ENCODE measurements at regions of chr20 and their contacts with region 1.

Region 1: DNA sequence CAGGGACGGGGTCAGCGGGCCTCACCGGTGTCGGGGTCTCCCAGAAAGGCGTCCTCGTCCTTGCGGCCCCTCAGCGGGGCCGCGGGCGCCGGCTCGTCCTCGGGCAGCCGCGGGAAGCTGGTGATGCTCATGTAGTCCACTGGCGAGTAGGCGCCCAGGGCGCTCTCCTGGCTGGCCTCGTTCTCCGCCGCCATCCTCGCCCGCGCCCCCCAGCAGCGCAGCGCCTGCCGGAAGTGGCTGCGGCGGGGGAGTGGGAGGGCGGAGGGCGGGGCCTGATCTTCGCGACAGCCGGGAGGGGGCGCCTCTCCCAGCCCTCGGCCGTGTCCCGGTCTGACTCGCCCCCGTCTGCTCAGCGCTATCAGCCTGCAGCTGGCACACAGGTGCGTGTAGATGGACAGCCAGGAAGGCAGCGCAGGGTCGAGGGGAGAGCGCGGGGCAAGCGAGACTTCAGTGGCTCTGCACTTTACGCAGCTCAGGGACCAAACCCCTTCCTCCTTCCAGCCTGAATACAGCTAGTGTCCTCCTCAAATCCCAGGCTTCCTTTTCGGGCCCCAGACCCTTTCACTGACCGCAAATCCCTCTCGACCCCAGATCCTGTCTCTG is at the start of gene GGT7:
- DNase-seq: peak; percentile 64 to 78
- H3K4me3 ChIP-seq: peak within 1 kb of the TSS; percentile 56 to 89 (median 81)
- H3K27ac ChIP-seq: peak within 1 kb of the TSS; percentile 76
- H3K4me1 ChIP-seq: peaks cover 0 to 13% of the 10 kb centered on the region in 2 donors
- H3K27me3 ChIP-seq: no peaks in the 10 kb centered on the region
- CTCF ChIP-seq: peak; percentile 38 to 61 (median 40)
- POLR2A ChIP-seq: no peak
- total RNA-seq, gene GGT7: 13.1 to 21.8 (median 16.4) TPM

Region 2: DNA sequence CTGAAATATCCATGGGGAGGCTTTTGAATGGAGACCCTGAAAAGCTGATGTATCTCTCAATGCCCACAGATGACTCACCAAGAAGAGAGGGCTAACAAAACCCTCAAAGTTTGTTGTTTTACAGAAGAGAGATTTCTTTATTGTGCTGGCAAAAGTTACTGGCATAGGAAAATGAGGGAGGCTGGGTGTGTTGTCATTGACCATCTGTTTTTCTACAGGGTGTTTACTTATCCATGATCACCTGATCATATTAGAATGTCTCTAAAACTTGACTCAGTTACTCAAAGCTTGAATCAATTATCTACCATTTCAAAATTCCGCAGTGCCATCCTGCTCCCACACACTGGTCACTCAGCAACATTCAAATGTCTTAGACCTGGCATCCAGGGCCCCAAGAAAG is 57.1 kb before region 1 on chr20:
- intact Hi-C with region 1: no loop called
- DNase-seq: no peak
- H3K4me3 ChIP-seq: no peak overlapping the region
- H3K27ac ChIP-seq: no peak overlapping the region
- H3K4me1 ChIP-seq: no peaks in the 10 kb centered on the region
- H3K27me3 ChIP-seq: no peaks in the 10 kb centered on the region
- CTCF ChIP-seq: no peak
- POLR2A ChIP-seq: no peak

Region 3: DNA sequence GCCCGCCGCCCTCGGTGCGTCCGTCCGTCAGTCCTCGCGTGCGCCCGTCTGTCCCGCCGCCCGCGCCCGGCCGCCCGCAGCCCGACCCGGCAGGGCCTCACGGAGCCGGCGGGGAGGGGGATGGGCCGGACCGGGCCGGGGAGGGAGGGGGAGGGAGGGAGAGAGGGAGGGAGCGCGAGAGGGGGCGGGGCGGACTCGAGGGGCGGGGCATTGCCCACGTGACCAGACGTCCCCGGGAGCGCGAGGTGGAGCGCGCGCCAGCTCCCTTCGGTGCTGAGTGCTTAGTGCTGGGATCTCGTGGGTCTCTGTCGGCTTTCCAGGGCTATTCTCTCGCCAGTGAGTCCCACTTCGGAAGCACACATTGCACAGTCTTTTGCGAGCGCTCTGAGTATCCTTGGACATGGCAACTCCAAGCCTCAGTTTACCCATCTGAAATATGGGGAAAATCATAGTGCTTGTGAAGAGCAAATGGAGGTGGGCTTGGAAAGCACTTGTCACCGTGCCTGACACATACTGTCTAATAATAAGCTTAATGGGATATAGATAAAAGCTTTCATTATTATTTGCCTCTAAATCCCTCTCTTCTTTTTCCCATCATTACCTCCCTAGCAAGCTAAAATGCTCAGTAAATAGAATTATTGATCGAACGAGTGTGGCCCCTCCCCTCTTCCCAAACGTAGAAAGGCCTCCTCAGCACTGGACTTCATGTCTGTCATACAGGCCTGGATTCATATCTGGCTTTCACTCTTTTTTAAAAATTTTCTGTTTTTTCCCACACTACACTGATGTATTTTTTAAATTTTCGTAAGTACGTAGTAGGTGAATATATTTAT is 47.0 kb before region 1 on chr20 and contains the start of gene NCOA6:
- intact Hi-C with region 1: no loop called
- DNase-seq: peak; percentile 74 to 90
- H3K4me3 ChIP-seq: peak within 1 kb of the TSS; percentile 78 to 90 (median 89)
- H3K27ac ChIP-seq: peak within 1 kb of the TSS; percentile 92 to 98
- H3K4me1 ChIP-seq: no peaks in the 10 kb centered on the region
- H3K27me3 ChIP-seq: no peaks in the 10 kb centered on the region
- CTCF ChIP-seq: no peak
- POLR2A ChIP-seq: no peak
- total RNA-seq, gene NCOA6: 20.0 to 20.6 (median 20.3) TPM

Region 4: GRCh38 chr20:34955232-34956040 is 82.7 kb after region 1 on chr20 and contains the starts of genes GSS and MYH7B:
- intact Hi-C with region 1: loop called (anchors 5 kb)
- DNase-seq: peak; percentile 96 to 97
- H3K4me3 ChIP-seq: peak within 1 kb of the TSS; percentile 56 to 81 (median 71)
- H3K27ac ChIP-seq: peak within 1 kb of the TSS; percentile 90 to 94
- H3K4me1 ChIP-seq: peaks cover 0 to 4% of the 10 kb centered on the region in 2 donors
- H3K27me3 ChIP-seq: no peaks in the 10 kb centered on the region
- CTCF ChIP-seq: peak in 2 of 3 donors; percentile 57 to 70
- POLR2A ChIP-seq: peak; percentile 72
- total RNA-seq, gene GSS: 33.4 to 61.9 (median 53.7) TPM
- total RNA-seq, gene MYH7B: 0.66 to 1.1 (median 0.73) TPM

Region 5: DNA sequence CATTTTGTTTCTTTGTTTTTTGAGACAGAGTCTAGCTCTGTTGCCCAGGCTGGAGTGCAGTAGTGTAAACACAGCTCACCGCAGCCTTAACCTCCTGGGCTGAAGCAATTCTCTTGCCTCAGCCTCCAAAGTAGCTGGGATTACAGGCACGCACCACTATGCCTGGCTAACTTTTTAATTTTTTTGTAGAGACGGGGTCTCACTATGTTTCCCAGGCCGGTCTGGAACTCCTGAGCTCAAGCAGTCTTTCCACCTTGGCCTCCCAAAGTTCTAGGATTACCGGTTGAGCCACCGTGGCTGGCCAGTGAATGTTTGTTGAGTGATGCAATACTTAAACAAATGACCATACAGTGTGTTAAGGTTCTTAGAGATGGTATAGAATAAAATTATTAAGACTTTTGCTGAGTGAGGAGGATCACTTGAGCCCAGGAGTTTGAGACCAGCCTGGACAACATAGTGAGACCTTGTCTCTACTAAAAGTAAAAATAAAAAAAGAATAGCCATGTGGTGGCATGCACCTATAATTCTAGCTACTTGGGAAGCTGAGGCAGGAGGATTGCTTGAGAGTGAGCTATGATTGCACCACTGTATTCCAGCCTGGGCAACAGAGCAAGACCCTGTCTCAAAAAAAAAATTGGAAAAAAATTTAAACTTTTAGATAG is 596.1 kb after region 1 on chr20:
- intact Hi-C with region 1: no loop called
- DNase-seq: no peak
- H3K4me3 ChIP-seq: no peak overlapping the region
- H3K27ac ChIP-seq: no peak overlapping the region
- H3K4me1 ChIP-seq: no peaks in the 10 kb centered on the region
- H3K27me3 ChIP-seq: no peaks in the 10 kb centered on the region
- CTCF ChIP-seq: no peak
- POLR2A ChIP-seq: no peak

Measured in breast epithelium (tissue), 4 donors.